Activated CD8-positive, alpha-beta T cell treated with anti-CD3 and anti-CD28 coated beads for 36 hours (primary cell): ENCODE measurements at regions of chr17 and their contacts with region 1.

Region 1: DNA sequence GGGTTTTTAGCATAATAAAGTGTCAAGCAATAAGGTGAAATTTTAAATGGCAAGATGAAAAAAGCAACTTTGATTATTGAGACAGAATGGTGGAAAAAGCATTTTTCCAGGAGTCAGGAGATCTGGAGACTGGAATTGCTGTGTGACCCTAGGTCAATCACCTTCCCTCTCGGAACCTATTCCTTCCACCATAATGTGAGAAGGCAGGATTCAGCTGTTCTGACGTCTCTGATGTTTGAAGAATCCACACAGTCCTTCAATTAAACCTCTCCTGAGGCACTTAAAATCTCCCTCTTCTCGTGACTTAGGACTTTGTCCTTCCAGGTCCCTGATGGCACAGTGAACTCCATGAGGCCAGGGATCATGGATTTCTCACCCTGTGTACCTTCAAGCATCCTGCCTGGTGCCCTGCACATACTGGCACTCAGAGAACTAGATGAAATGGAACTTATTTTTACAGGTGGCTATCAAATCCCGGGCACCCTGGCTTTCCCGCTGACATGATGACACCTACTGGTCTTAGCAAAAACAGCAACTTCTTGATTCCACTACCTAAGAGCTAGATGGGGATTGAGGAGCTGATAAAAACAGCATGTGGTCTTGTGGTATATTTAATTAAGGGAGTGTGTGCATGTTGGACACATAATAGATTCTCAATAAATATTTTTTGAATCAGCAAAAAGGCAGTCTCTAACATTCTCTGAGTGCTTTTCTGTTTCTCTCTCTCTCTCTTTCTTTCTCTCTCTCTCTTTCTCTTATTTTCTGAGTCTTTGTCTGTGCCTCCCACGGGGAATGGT is 2.3 kb upstream of the CCDC182 start:
- DNase-seq: peak; percentile 64
- ATAC-seq: peak; percentile 89
- H3K4me3 Mint-ChIP-seq: no peak overlapping the region
- H3K27ac Mint-ChIP-seq: no peak overlapping the region
- H3K4me1 Mint-ChIP-seq: peaks cover 8% of the 10 kb centered on the region
- H3K27me3 Mint-ChIP-seq: no peaks in the 10 kb centered on the region
- CTCF ChIP-seq: peak; percentile 88

Region 2: GRCh38 chr17:57130761-57131461 is 616.5 kb before region 1 on chr17:
- CTCF ChIA-PET with region 1: interaction called, 6 read pairs
- POLR2A ChIA-PET with region 1: no interaction called
- intact Hi-C with region 1: loop called (anchors 10 kb)
- DNase-seq: peak; percentile 90
- ATAC-seq: peak; percentile 91
- H3K4me3 Mint-ChIP-seq: no peak overlapping the region
- H3K27ac Mint-ChIP-seq: no peak overlapping the region
- H3K4me1 Mint-ChIP-seq: peaks cover 6% of the 10 kb centered on the region
- H3K27me3 Mint-ChIP-seq: no peaks in the 10 kb centered on the region
- CTCF ChIP-seq: peak; percentile 87

Region 3: GRCh38 chr17:57597531-57598453 is 149.6 kb before region 1 on chr17:
- CTCF ChIA-PET with region 1: interaction called, 27 read pairs
- POLR2A ChIA-PET with region 1: no interaction called
- intact Hi-C with region 1: loop called (anchors 10 kb)
- DNase-seq: peak; percentile 55
- ATAC-seq: no peak
- H3K4me3 Mint-ChIP-seq: no peak overlapping the region
- H3K27ac Mint-ChIP-seq: peak overlapping the region; percentile 95
- H3K4me1 Mint-ChIP-seq: peaks cover 60% of the 10 kb centered on the region
- H3K27me3 Mint-ChIP-seq: no peaks in the 10 kb centered on the region
- CTCF ChIP-seq: peak; percentile 81

Region 4: GRCh38 chr17:57604771-57605674 is 142.4 kb before region 1 on chr17:
- CTCF ChIA-PET with region 1: interaction called, 27 read pairs
- POLR2A ChIA-PET with region 1: no interaction called
- intact Hi-C with region 1: loop called (anchors 10 kb)
- DNase-seq: peak; percentile 74
- ATAC-seq: peak; percentile 51
- H3K4me3 Mint-ChIP-seq: peak overlapping the region; percentile 40
- H3K27ac Mint-ChIP-seq: peak overlapping the region; percentile 93
- H3K4me1 Mint-ChIP-seq: peaks cover 84% of the 10 kb centered on the region
- H3K27me3 Mint-ChIP-seq: no peaks in the 10 kb centered on the region
- CTCF ChIP-seq: no peak

Region 5: DNA sequence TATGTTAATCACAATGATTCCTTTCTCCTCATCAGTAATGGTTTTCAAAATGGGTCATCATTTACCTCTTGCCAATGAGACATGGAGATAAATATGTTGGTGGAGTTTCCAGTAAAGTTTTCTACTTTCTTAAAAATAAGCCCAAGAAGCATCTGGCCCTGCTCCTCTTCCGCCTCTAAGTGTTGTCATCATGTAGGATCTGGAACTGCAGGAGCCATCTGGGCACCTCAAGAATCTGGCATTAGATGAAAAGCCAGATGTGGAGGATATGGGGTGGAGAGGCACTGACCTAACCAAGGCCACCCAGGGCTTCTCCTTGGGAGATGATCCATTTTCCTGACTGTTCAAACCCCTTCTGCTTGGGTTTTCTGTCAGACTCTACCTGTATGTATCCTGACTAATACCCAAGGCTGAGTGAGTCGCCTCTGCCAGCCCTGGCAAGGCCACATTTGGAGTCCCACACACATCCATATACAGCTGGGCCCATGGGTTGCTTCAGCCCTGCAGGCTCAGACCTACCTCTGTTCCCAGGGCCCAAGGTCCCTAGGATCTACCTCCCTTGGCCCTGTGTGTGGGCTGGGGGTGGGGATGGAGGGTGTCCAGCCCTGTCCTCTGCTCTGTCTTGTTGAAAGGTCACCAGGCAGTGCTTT is 26.9 kb before region 1 on chr17:
- CTCF ChIA-PET with region 1: no interaction called
- POLR2A ChIA-PET with region 1: no interaction called
- intact Hi-C with region 1: no loop called
- DNase-seq: no peak
- ATAC-seq: no peak
- H3K4me3 Mint-ChIP-seq: no peak overlapping the region
- H3K27ac Mint-ChIP-seq: no peak overlapping the region
- H3K4me1 Mint-ChIP-seq: no peaks in the 10 kb centered on the region
- H3K27me3 Mint-ChIP-seq: peaks cover 6% of the 10 kb centered on the region
- CTCF ChIP-seq: no peak

Region 6: DNA sequence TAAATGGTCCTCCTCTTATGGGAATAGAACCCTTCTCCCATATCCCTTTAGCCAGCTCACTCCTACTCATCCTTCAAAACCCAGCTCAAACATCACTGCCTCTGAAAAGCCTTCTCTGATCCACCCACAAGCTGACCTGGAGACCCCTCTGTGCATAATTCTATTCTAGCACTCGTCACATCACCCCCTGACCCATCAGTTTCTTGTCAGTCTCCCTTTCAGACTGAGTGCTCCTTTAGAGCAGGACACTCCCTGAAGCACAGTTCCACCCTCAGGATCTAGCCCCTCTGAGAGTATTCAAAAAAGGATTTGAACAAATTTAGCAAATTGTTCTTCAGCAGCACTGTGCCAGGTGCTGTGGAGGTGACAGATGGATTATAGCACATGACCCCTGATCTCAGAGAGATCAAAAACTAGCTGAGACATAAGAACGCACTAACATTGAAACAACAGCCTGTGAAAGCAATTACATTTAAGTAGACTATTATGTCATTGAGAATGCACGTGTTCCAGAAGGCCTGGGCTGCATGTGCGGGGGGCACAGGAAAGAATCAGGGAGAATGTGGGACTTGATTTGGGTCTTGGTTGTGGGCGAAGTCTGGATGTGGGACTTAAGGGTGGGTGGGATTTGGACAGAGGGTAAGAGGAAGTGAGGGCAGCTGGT is 58.9 kb after region 1 on chr17:
- CTCF ChIA-PET with region 1: no interaction called
- POLR2A ChIA-PET with region 1: no interaction called
- intact Hi-C with region 1: no loop called
- DNase-seq: no peak
- ATAC-seq: no peak
- H3K4me3 Mint-ChIP-seq: no peak overlapping the region
- H3K27ac Mint-ChIP-seq: no peak overlapping the region
- H3K4me1 Mint-ChIP-seq: peaks cover 10% of the 10 kb centered on the region
- H3K27me3 Mint-ChIP-seq: peaks cover 27% of the 10 kb centered on the region
- CTCF ChIP-seq: no peak

Region 7: DNA sequence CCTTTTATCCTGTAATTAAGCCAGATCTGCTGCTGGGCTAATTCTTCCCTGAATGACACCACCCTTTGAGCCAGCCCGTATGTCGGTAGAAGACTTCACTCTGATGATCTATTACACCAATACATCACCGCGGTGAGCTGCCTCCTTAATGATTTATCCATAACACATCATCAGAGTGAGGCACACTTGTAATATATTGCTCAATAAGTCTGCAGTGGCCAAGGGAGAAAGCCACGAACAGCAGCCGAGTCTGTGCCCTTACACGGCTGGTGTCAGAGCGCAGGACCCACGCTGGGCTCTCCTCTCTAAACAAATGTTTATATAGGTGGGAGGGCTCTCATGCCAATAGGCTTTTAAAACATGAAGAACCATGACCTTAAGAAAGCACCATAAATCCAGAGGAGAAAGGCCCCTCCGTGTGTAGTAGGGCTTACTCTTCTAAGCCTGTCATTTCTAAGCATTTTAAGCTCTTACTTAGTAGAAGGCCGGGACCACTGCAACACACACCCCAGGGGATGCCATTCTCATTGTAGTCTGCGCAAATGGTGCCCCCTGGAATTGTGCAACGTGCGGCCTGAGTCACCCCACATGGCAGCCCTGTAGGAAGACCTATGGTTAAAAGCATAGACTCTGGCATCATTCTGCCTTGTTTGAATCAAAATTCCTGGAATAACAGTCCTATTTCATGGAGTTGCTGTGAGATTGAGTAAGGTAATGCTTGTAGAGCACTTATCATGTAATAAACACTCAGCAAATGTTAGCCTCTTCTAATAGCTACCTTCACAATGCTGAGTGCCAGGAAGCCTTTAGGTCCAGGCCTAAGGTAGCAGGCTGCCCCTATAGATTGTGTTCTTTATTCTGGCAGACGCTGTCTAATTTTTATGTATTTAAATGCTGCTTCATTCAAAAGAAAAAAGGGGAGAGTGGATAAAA is 76.3 kb after region 1 on chr17:
- CTCF ChIA-PET with region 1: no interaction called
- POLR2A ChIA-PET with region 1: no interaction called
- intact Hi-C with region 1: no loop called
- DNase-seq: no peak
- ATAC-seq: no peak
- H3K4me3 Mint-ChIP-seq: no peak overlapping the region
- H3K27ac Mint-ChIP-seq: no peak overlapping the region
- H3K4me1 Mint-ChIP-seq: no peaks in the 10 kb centered on the region
- H3K27me3 Mint-ChIP-seq: no peaks in the 10 kb centered on the region
- CTCF ChIP-seq: no peak